PC-9 (cell line): ENCODE measurements at regions of chr1 and their contacts with region 1.

Region 1: GRCh38 chr1:16187748-16188401 is 24.6 kb downstream of the ARHGEF19 start:
- DNase-seq: peak; percentile 72 to 84
- H3K4me3 ChIP-seq: no peak overlapping the region
- H3K27ac ChIP-seq: peak overlapping the region; percentile 88
- H3K4me1 ChIP-seq: peaks cover 64% of the 10 kb centered on the region
- H3K27me3 ChIP-seq: no peaks in the 10 kb centered on the region
- CTCF ChIP-seq: peak; percentile 93

Region 2: DNA sequence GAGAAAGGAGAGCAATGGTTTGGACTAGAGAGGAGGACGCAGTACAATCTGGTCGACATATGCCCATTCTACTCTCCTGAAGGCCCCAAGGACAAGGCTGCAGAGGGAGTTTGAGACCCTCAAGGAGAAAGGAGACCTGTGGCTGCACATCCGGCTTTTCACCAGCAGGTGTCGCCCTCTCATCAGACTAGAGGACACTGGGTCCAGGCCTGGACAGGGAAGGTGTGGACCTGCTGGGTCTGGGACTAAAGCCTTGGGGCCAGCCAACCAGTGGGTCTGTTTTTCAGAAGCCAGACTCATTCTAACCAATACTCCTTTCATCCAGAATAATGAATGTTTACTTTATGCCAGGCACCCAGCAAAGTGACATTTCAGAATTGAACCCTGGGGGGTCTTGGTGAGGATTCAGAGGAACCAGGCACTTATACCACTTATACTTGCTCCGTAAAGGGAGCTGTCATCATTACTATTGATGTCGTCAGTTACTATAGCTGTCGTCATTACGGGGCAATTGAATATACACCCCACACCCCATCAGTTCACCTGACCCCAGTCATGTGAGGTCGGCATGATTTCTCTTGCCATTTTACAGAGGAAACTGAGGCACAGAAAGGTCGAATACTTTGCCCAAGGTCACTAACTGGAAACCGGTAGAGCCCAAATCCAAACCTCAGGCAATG is 178.7 kb before region 1 on chr1:
- CTCF ChIA-PET with region 1: no interaction called
- POLR2A ChIA-PET with region 1: no interaction called
- intact Hi-C with region 1: loop called (anchors 2 kb)
- DNase-seq: peak; percentile 43 to 69
- H3K4me3 ChIP-seq: no peak overlapping the region
- H3K27ac ChIP-seq: no peak overlapping the region
- H3K4me1 ChIP-seq: peaks cover 5% of the 10 kb centered on the region; the same call in 1 of the 2 replicates
- H3K27me3 ChIP-seq: no peaks in the 10 kb centered on the region
- CTCF ChIP-seq: peak; percentile 94

Region 3: GRCh38 chr1:16139473-16139962 is 48.4 kb before region 1 on chr1:
- CTCF ChIA-PET with region 1: interaction called, 5 read pairs
- POLR2A ChIA-PET with region 1: interaction called, 9 read pairs
- intact Hi-C with region 1: loop called (anchors 1 kb)
- DNase-seq: peak; percentile 47 to 89
- H3K4me3 ChIP-seq: peak overlapping the region; percentile 33; the same call in 1 of the 2 replicates
- H3K27ac ChIP-seq: peak overlapping the region; percentile 92
- H3K4me1 ChIP-seq: peaks cover 72% of the 10 kb centered on the region
- H3K27me3 ChIP-seq: no peaks in the 10 kb centered on the region
- CTCF ChIP-seq: no peak; the same call in 1 of the 2 replicates

Region 4: DNA sequence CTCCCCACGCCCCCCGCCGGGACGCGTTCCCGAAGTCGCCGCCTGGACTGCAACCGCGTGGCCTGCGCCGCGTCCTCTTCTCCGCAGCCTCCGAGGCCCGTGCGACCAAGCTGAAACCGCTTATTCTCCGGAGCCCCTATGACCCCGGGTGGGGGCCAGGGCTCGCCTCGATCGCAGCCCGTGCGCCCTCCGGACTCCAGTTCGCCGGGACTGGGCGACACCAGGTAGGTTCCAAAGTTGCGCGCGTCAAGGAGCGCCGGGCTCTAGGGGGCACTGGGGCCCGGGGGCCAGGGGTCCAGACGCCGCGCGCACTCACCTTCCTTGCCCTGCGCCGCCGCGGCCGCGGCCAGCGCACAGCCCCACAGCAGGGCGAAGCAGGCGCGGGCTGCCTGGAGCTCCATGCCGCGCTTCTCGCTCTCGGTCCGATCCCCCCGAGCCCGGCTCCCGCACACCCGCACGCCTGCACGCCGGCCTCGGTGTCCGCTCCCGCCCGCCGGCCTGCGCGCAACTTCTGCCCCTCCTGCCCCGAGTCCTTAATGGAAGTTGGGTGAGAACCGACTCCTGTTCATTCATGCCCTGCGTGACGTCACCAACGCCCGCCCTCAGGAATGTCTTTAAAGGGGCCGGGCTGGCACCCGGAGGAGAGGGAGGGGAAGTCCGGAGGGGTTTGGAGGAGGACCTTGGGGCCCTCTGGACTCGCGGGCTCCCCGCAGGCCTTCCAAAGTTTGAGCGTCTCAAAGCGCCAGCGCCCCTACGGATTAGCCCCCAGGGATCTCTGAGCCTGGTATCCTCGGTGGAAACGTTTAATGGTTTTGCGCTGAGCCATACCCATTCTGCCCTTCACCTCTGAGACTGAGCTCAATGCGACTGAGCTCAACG is 32.1 kb before region 1 on chr1 and contains the start of gene EPHA2:
- CTCF ChIA-PET with region 1: interaction called, 5 read pairs
- POLR2A ChIA-PET with region 1: interaction called, 7 read pairs
- intact Hi-C with region 1: loop called (anchors 1 kb)
- DNase-seq: peak; percentile 84 to 92
- H3K4me3 ChIP-seq: peak within 1 kb of the TSS; percentile 86
- H3K27ac ChIP-seq: peak within 1 kb of the TSS; percentile 81
- H3K4me1 ChIP-seq: peaks cover 51% of the 10 kb centered on the region
- H3K27me3 ChIP-seq: no peaks in the 10 kb centered on the region
- CTCF ChIP-seq: no peak
- total RNA-seq, gene EPHA2: 48.3 and 65.8 TPM in 2 replicates

Region 5: GRCh38 chr1:16206547-16207317 is 18.9 kb after region 1 on chr1:
- CTCF ChIA-PET with region 1: interaction called, 4 read pairs
- POLR2A ChIA-PET with region 1: interaction called, 18 read pairs
- intact Hi-C with region 1: loop called (anchors 2 kb)
- DNase-seq: peak; percentile 89 to 97
- H3K4me3 ChIP-seq: peak overlapping the region; percentile 67
- H3K27ac ChIP-seq: peak overlapping the region; percentile 83
- H3K4me1 ChIP-seq: peaks cover 16% of the 10 kb centered on the region
- H3K27me3 ChIP-seq: no peaks in the 10 kb centered on the region
- CTCF ChIP-seq: no peak

Region 6: DNA sequence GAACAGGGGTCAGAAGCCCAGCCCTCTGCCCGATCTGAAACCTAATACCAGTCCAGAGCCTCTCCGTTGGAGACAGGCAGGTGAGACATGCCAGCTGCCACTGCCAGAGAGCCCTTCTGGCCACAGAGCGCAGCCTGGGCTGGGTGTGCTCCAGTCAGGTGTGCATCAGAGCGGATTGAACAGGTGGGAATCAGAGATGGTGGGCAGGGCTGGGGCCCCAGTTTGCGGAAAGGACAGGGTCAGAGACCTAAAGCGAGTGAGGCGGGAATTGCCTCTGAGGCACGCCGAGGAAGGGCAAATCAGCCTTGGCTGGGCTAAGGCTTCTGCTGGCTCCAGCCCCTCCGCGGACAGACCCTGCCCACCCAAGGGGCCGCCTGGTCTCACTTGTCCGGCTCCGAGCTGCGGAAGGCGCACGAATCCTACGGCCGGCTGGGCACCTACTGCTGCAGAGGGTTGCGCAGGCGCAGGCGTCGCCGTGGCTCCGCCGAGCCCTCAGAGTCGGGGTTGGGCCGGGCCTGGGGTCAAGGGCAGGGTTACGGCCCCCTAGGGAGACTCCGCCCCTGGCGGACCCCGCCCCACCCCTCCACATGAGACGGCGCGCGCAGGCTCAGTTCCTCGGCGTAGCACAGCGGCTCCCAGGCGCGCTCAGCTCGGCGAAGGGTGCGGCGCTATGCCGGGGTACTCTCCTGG is 38.8 kb after region 1 on chr1:
- CTCF ChIA-PET with region 1: no interaction called
- POLR2A ChIA-PET with region 1: no interaction called
- intact Hi-C with region 1: no loop called
- DNase-seq: no peak
- H3K4me3 ChIP-seq: no peak overlapping the region
- H3K27ac ChIP-seq: no peak overlapping the region
- H3K4me1 ChIP-seq: no peaks in the 10 kb centered on the region
- H3K27me3 ChIP-seq: no peaks in the 10 kb centered on the region
- CTCF ChIP-seq: no peak

Region 7: DNA sequence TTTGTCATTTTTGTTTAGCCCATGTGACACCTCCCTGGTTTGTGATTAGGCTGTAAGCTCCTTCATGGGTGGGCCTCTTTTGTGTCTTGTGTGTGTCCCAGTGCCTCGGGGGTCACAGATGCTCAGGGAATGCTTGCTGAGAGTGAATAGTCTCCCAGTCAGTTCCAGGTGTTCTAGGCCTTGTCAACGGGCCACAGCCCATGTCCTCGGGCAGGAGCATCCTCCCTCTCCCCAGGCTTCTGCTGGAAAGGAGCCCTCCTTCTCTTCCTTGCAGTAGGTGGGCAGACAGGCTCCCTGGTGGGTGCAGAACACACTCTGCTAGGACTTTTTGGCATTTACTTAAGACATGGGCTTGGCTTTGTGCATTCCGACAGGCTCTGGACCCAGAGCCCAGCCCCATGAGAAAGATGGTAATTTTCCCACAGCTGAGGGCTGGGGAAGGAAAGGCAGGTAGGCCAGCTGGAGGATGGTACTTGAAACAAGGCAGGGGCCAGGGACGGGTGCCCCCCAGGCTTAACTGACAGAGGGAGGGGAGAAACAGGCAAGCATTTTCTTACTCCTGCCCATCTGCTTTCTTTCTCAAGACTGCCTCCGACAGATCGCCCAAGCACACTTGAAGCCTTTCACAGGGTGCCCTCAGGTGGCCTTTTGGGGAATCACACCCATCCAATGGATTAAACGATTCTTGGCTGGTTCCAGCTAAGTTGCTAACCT is 56.2 kb after region 1 on chr1:
- CTCF ChIA-PET with region 1: interaction called, 3 read pairs
- POLR2A ChIA-PET with region 1: interaction called, 4 read pairs
- intact Hi-C with region 1: loop called (anchors 2 kb)
- DNase-seq: peak; percentile 60 to 73
- H3K4me3 ChIP-seq: no peak overlapping the region
- H3K27ac ChIP-seq: no peak overlapping the region
- H3K4me1 ChIP-seq: peaks cover 15% of the 10 kb centered on the region
- H3K27me3 ChIP-seq: no peaks in the 10 kb centered on the region
- CTCF ChIP-seq: peak; percentile 81